ENCODE measurements at regions of chr16 and their contacts with region 1.

Region 1: GRCh38 chr16:10828851-10829731 is 10.5 kb upstream of the TVP23A start:
- DNase-seq: peak; percentile 95

Region 2: GRCh38 chr16:10521681-10522274 is 307.3 kb before region 1 on chr16:
- intact Hi-C with region 1: loop called (anchors 10 kb)
- DNase-seq: no peak

Region 3: DNA sequence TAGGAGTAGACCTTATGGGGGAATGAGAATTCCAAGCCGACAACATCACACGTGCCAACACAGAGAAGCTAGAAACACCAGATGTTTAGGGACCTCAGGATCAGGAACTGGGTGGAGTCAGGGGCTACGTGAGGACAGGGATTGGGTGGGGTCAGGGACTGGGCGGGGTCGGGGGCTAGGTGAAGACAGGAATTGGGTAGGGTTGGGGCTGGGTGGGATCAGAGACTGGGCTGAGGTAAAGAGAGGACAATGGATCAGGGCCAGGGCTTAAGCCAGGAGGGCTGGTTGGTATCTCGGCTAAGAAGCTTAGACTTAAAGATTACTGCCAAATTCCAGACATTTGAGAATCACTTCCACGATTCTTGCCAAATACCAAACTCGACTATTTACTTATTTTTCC is 145.9 kb before region 1 on chr16:
- intact Hi-C with region 1: no loop called
- DNase-seq: no peak

Region 4: GRCh38 chr16:10871149-10871991 is 42.3 kb after region 1 on chr16:
- intact Hi-C with region 1: loop called (anchors 1 kb)
- DNase-seq: no peak

Region 5: DNA sequence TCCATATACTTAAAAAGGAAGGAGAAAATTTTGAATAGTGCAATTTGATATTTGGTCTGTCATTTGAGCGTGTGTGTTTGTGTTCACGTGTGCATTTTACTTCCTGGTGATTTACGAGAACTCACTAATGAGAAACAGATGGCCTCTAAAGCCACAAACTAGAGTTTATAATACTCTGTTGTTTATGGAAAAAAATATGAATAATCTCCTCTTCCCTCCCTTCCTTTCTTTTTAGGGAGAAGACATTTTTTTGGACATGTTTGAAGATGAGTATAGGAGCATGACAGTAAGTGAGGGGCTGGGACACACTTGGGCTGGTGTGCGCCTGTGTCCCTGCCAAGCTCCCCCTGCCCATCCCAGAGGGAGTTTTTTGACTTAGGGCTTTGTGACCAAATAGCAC is 218.0 kb after region 1 on chr16:
- intact Hi-C with region 1: no loop called
- DNase-seq: no peak